Naive thymus-derived CD4-positive, alpha-beta T cell (primary cell): ENCODE measurements at regions of chr5 and their contacts with region 1.

Region 1: GRCh38 chr5:115377468-115378217 is 81.2 kb upstream of the CCDC112 start:
- DNase-seq: no peak
- ATAC-seq: no peak
- H3K4me3 ChIP-seq: no peak overlapping the region
- H3K4me3 Mint-ChIP-seq: peak overlapping the region in 1 of 10 donors; percentile 18
- H3K27ac ChIP-seq: no peak overlapping the region
- H3K27ac Mint-ChIP-seq: no peak overlapping the region
- H3K4me1 ChIP-seq: no peaks in the 10 kb centered on the region
- H3K4me1 Mint-ChIP-seq: peaks cover 0 to 18% (median 0%) of the 10 kb centered on the region in 7 donors
- H3K27me3 ChIP-seq: no peaks in the 10 kb centered on the region
- H3K27me3 Mint-ChIP-seq: peaks cover 0 to 8% (median 3%) of the 10 kb centered on the region in 5 donors

Region 2: GRCh38 chr5:115460472-115460871 is 82.8 kb after region 1 on chr5:
- CTCF ChIA-PET with region 1: no interaction called
- POLR2A ChIA-PET with region 1: no interaction called
- intact Hi-C with region 1: loop called in 1 of 2 experiments (anchors 5 kb)
- DNase-seq: no peak
- ATAC-seq: peak; percentile 64
- H3K4me3 ChIP-seq: no peak overlapping the region
- H3K4me3 Mint-ChIP-seq: no peak overlapping the region
- H3K27ac ChIP-seq: no peak overlapping the region
- H3K27ac Mint-ChIP-seq: no peak overlapping the region
- H3K4me1 ChIP-seq: no peaks in the 10 kb centered on the region
- H3K4me1 Mint-ChIP-seq: peaks cover 0 to 7% (median 0%) of the 10 kb centered on the region in 7 donors
- H3K27me3 ChIP-seq: no peaks in the 10 kb centered on the region
- H3K27me3 Mint-ChIP-seq: peaks cover 13 to 31% (median 27%) of the 10 kb centered on the region in 5 donors

Region 3: DNA sequence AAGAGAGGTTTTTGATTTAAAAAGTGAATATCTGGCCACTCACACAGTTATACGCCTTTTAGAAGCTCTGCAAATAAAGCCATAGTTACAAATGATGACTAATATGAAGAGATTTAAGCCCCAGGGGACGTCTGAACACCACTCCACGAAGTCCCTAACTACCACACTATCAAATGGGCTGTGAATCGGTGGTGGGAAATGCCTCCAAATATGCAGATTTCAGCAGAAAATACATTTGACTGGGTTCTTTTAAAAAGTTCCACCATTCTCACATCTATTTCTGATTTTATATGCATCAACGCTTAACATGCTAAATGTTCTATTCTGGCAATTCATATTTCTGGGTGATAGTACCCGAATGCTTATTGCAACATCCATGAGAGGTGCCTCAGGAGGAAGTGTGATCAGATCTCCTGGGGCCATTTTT is 202.1 kb after region 1 on chr5:
- CTCF ChIA-PET with region 1: no interaction called
- POLR2A ChIA-PET with region 1: no interaction called
- intact Hi-C with region 1: loop called in 1 of 2 experiments (anchors 10 kb)
- DNase-seq: no peak
- ATAC-seq: no peak
- H3K4me3 ChIP-seq: no peak overlapping the region
- H3K4me3 Mint-ChIP-seq: no peak overlapping the region
- H3K27ac ChIP-seq: no peak overlapping the region
- H3K27ac Mint-ChIP-seq: no peak overlapping the region
- H3K4me1 ChIP-seq: no peaks in the 10 kb centered on the region
- H3K4me1 Mint-ChIP-seq: no peaks in the 10 kb centered on the region
- H3K27me3 ChIP-seq: no peaks in the 10 kb centered on the region
- H3K27me3 Mint-ChIP-seq: peaks cover 0 to 4% (median 0%) of the 10 kb centered on the region in 5 donors

Region 4: DNA sequence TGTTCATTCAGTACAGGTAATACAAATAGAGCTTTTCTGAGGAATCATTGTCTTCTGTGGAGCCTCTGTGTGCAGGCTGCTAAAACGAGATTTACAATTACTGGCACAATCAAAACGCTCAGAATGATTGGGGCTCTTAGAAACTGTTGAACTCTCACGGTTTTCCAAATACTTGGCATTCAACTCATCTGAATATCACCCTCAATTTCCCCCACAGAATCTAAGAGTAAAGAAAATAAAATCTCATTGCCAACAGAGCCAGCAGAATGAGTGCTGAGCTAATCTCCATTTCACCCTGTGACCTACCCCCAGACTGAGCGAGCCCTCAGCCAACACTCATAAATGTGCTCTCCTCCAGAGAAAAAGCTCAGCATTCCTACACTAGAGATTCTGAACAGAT is 283.5 kb after region 1 on chr5:
- CTCF ChIA-PET with region 1: no interaction called
- POLR2A ChIA-PET with region 1: no interaction called
- intact Hi-C with region 1: loop called in 1 of 2 experiments (anchors 5 kb)
- DNase-seq: no peak
- ATAC-seq: no peak
- H3K4me3 ChIP-seq: no peak overlapping the region
- H3K4me3 Mint-ChIP-seq: no peak overlapping the region
- H3K27ac ChIP-seq: no peak overlapping the region
- H3K27ac Mint-ChIP-seq: no peak overlapping the region
- H3K4me1 ChIP-seq: no peaks in the 10 kb centered on the region
- H3K4me1 Mint-ChIP-seq: no peaks in the 10 kb centered on the region
- H3K27me3 ChIP-seq: peaks cover 0 to 3% of the 10 kb centered on the region in 2 donors
- H3K27me3 Mint-ChIP-seq: peaks cover 34 to 56% (median 36%) of the 10 kb centered on the region in 5 donors